ENCODE measurements at regions of chr3 and their contacts with region 1.

Region 1: DNA sequence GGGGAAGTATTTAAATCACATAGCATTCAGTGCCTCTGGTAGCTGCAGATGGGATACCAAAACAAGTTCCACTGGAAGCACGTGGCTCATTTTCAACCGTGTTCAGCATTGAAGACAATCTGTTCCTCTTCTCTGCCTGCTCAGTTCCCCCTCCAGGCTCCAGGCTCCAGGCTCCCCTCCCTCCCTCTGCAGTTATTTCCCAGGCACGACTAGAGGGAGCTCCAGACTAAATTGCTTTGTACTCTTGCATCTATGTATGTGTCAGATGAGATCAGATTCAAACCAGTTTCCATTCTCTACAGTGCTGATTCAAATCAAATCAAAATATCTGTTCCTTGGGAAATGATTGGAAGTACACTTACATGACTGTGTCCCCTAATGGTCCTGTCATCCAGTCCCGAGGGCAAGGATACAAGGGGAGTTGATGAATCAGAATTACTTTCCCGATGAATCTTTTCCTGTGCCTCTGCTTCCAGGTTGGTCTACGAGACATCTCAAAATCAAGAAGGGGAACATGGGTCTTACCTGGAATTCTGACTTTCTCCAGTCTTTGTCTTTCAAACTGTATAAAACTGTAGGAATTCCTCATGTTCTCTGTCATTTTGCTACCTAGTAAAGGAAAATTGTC is 600.5 kb downstream of the EDEM1 start:
- DNase-seq: no peak
- H3K4me3 ChIP-seq: no peak overlapping the region
- H3K27ac ChIP-seq: no peak overlapping the region
- H3K4me1 ChIP-seq: no peaks in the 10 kb centered on the region
- H3K27me3 ChIP-seq: no peaks in the 10 kb centered on the region
- CTCF ChIP-seq: no peak

Region 2: DNA sequence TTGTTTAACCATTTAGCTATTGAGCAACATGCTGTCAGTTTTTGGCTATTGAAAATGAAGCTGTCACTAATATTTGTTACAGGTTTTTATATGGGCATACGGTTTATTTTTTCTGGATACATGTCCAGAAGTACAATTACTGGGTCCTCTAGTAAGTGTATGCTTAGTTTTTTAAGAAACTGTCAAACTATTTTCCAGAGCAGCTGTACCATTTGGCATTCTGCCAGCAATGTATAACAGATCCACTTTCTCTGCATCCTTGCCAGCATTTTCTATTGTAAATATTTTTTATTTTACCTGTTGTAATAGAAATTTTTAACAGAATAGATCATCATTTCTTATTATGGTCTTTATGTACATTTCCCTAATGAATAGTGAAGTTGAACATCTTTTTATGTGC is 58.3 kb after region 1 on chr3:
- intact Hi-C with region 1: loop called (anchors 10 kb)
- DNase-seq: no peak
- H3K4me3 ChIP-seq: no peak overlapping the region
- H3K27ac ChIP-seq: no peak overlapping the region
- H3K4me1 ChIP-seq: no peaks in the 10 kb centered on the region
- H3K27me3 ChIP-seq: no peaks in the 10 kb centered on the region
- CTCF ChIP-seq: no peak